Colonic mucosa (tissue), 4 donors: ENCODE measurements at regions of chr1 and their contacts with region 1.

Region 1: GRCh38 chr1:45809761-45810160 is 6.3 kb downstream of the MAST2 start:
- DNase-seq: no peak
- H3K4me3 ChIP-seq: no peak overlapping the region
- H3K27ac ChIP-seq: no peak overlapping the region
- H3K4me1 ChIP-seq: peaks cover 4% of the 10 kb centered on the region
- H3K27me3 ChIP-seq: no peaks in the 10 kb centered on the region
- CTCF ChIP-seq: no peak

Region 2: DNA sequence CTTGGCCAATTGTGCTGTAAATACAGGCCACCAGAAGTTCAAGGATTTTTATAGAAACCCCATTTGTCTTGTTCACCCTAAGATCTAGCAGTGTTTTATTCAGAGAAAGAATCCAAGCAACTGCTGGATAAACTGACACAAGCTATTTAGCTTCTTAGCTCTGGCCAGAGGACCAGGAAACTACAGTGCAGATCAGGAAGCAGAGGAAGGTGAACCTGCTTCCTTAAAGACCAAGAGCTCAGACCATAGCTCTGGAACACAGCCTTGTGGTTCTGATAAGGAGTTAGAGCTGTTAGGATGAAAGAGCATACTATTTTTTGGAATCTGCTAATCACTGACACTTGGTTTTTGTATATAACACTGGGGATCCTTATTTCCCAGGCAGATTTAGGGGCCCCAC is 180.7 kb before region 1 on chr1:
- intact Hi-C with region 1: no loop called
- DNase-seq: no peak
- H3K4me3 ChIP-seq: no peak overlapping the region
- H3K27ac ChIP-seq: no peak overlapping the region
- H3K4me1 ChIP-seq: no peaks in the 10 kb centered on the region
- H3K27me3 ChIP-seq: no peaks in the 10 kb centered on the region
- CTCF ChIP-seq: no peak

Region 3: GRCh38 chr1:45750298-45751038 is 59.3 kb before region 1 on chr1 and contains the start of gene IPP:
- intact Hi-C with region 1: loop called (anchors 5 kb)
- DNase-seq: peak; percentile 97
- H3K4me3 ChIP-seq: peak within 1 kb of the TSS; percentile 58
- H3K27ac ChIP-seq: peak within 1 kb of the TSS; percentile 97
- H3K4me1 ChIP-seq: no peaks in the 10 kb centered on the region
- H3K27me3 ChIP-seq: no peaks in the 10 kb centered on the region
- CTCF ChIP-seq: no peak
- total RNA-seq, gene IPP: 17.7 to 19.2 TPM

Region 4: DNA sequence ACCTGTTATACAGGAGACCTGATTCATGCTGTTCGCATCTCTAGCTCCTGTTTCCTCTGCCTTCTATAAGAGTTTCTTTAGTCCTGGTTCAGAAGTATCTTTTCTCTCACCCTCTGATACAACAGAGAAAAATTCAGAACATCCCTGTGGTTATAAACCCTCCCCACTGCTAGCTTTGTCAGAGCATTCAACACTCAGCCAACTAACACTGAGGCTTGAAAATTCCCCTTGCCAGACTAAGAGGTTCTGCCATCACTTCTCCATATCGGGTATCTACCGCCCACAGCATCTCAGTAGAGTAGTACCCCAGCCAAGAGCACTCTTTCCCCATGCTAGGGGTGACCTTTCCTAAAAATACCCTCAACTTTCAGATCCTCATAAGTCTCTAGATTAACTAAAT is 342.3 kb after region 1 on chr1:
- intact Hi-C with region 1: no loop called
- DNase-seq: no peak
- H3K4me3 ChIP-seq: no peak overlapping the region
- H3K27ac ChIP-seq: no peak overlapping the region
- H3K4me1 ChIP-seq: no peaks in the 10 kb centered on the region
- H3K27me3 ChIP-seq: no peaks in the 10 kb centered on the region
- CTCF ChIP-seq: no peak